WTC11 (cell line): ENCODE measurements at regions of chr7 and their contacts with region 1.

Region 1: DNA sequence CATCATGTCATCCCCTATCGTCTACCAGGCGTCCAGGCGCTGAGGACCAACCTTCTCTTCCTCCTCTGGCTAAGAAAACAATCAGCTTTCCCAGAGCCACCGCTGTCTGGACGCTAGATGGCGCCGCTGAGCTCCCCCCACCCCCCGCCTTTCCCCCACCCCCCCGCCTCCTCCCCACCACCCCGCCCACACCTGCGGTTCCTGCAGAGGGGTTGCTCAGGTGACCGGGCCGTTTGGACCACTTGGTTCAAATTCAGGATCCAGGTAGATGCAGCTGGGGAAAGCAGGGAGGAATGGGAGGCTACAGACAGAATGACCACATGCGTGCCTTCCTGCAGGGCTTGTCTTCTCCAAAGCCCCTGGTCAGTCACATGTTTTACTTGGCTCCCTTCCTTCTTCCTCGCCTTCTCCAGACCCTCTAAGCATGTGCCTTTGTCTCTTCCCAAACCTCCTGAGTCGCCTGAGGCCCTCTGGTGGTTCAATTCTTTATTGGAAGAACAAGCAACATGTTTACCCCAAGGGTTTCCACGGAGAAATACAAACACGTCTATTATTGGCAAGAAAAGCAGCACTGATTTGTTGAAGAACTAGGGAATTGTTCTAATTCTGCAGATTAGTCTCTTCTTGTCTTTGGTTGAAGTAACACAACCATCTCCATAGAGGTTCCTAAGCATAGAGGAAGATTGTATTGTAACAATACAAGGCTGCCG is 24.7 kb downstream of the AOC1 start:
- DNase-seq: peak; percentile 69
- ATAC-seq: peak; percentile 88
- H3K4me3 Mint-ChIP-seq: peak overlapping the region; percentile 37
- H3K27ac Mint-ChIP-seq: peak overlapping the region; percentile 35; the same call in 1 of the 2 replicates
- H3K4me1 Mint-ChIP-seq: peaks cover 16% of the 10 kb centered on the region
- H3K27me3 Mint-ChIP-seq: peaks cover 8% of the 10 kb centered on the region; the same call in 1 of the 2 replicates
- CTCF ChIP-seq: peak; percentile 52

Region 2: GRCh38 chr7:150787321-150788281 is 89.4 kb before region 1 on chr7:
- CTCF ChIA-PET with region 1: interaction called, 18 read pairs
- POLR2A ChIA-PET with region 1: no interaction called
- DNase-seq: no peak
- ATAC-seq: peak; percentile 64
- H3K4me3 Mint-ChIP-seq: no peak overlapping the region
- H3K27ac Mint-ChIP-seq: no peak overlapping the region
- H3K4me1 Mint-ChIP-seq: no peaks in the 10 kb centered on the region
- H3K27me3 Mint-ChIP-seq: peaks cover 13% of the 10 kb centered on the region
- CTCF ChIP-seq: no peak

Region 3: GRCh38 chr7:150852371-150852920 is 24.5 kb before region 1 on chr7 and contains the start of gene AOC1:
- CTCF ChIA-PET with region 1: interaction called, 18 read pairs
- POLR2A ChIA-PET with region 1: no interaction called
- DNase-seq: peak; percentile 28
- ATAC-seq: peak; percentile 80
- H3K4me3 Mint-ChIP-seq: no peak within 1 kb of the TSS
- H3K27ac Mint-ChIP-seq: no peak within 1 kb of the TSS
- H3K4me1 Mint-ChIP-seq: peaks cover 8% of the 10 kb centered on the region
- H3K27me3 Mint-ChIP-seq: peaks cover 5% of the 10 kb centered on the region
- CTCF ChIP-seq: no peak
- total RNA-seq, gene AOC1: 0.17 to 0.39 TPM (median 0.23 TPM) in 3 replicates

Region 4: GRCh38 chr7:150931199-150931869 is 54.4 kb after region 1 on chr7:
- CTCF ChIA-PET with region 1: no interaction called
- POLR2A ChIA-PET with region 1: no interaction called
- DNase-seq: no peak
- ATAC-seq: no peak
- H3K4me3 Mint-ChIP-seq: no peak overlapping the region
- H3K27ac Mint-ChIP-seq: no peak overlapping the region
- H3K4me1 Mint-ChIP-seq: no peaks in the 10 kb centered on the region
- H3K27me3 Mint-ChIP-seq: no peaks in the 10 kb centered on the region
- CTCF ChIP-seq: no peak

Region 5: GRCh38 chr7:150962553-150963399 is 85.8 kb after region 1 on chr7:
- CTCF ChIA-PET with region 1: interaction called, 12 read pairs
- POLR2A ChIA-PET with region 1: no interaction called
- DNase-seq: peak; percentile 83
- ATAC-seq: peak; percentile 93
- H3K4me3 Mint-ChIP-seq: no peak overlapping the region
- H3K27ac Mint-ChIP-seq: no peak overlapping the region
- H3K4me1 Mint-ChIP-seq: peaks cover 17% of the 10 kb centered on the region
- H3K27me3 Mint-ChIP-seq: no peaks in the 10 kb centered on the region
- CTCF ChIP-seq: peak; percentile 56